A549 (cell line): ENCODE measurements at regions of chr2 and their contacts with region 1.

Region 1: GRCh38 chr2:112749755-112750559 is 14.5 kb downstream of the CKAP2L start:
- DNase-seq: peak; percentile 58 to 74
- ATAC-seq: peak; percentile 97 to 98
- H3K4me3 ChIP-seq: no peak overlapping the region
- H3K27ac ChIP-seq: peak overlapping the region in 1 of 2 experiments; percentile 44; a peak in 1 of 6 replicates
- H3K4me1 ChIP-seq: peaks cover 17% of the 10 kb centered on the region
- CTCF ChIP-seq: peak; percentile 97
- EP300 ChIP-seq: no peak
- POLR2A ChIP-seq: no peak
- RAD21 ChIP-seq: peak; percentile 86 to 88

Region 2: GRCh38 chr2:112737542-112738232 is 12.3 kb before region 1 on chr2:
- CTCF ChIA-PET with region 1: interaction called, 35 read pairs
- POLR2A ChIA-PET with region 1: no interaction called
- DNase-seq: no peak
- ATAC-seq: 0 out of 6 replicates have a peak, but pooled peaks of 1 of the 2 experiments have one; percentile 38
- H3K4me3 ChIP-seq: no peak overlapping the region
- H3K27ac ChIP-seq: peak overlapping the region in 1 of 2 experiments; percentile 13; a peak in 1 of 6 replicates
- H3K4me1 ChIP-seq: peaks cover 18% of the 10 kb centered on the region
- CTCF ChIP-seq: no peak
- EP300 ChIP-seq: no peak
- POLR2A ChIP-seq: no peak
- RAD21 ChIP-seq: no peak

Region 3: GRCh38 chr2:112782234-112782799 is 32.4 kb after region 1 on chr2:
- CTCF ChIA-PET with region 1: interaction called, 12 read pairs
- POLR2A ChIA-PET with region 1: no interaction called
- DNase-seq: no peak
- ATAC-seq: no peak
- H3K4me3 ChIP-seq: no peak overlapping the region
- H3K27ac ChIP-seq: no peak overlapping the region
- H3K4me1 ChIP-seq: 0 out of 3 replicates have a peak, but pooled peaks cover 7% of the 10 kb centered on the region
- CTCF ChIP-seq: no peak
- EP300 ChIP-seq: no peak
- POLR2A ChIP-seq: no peak
- RAD21 ChIP-seq: no peak

Region 4: DNA sequence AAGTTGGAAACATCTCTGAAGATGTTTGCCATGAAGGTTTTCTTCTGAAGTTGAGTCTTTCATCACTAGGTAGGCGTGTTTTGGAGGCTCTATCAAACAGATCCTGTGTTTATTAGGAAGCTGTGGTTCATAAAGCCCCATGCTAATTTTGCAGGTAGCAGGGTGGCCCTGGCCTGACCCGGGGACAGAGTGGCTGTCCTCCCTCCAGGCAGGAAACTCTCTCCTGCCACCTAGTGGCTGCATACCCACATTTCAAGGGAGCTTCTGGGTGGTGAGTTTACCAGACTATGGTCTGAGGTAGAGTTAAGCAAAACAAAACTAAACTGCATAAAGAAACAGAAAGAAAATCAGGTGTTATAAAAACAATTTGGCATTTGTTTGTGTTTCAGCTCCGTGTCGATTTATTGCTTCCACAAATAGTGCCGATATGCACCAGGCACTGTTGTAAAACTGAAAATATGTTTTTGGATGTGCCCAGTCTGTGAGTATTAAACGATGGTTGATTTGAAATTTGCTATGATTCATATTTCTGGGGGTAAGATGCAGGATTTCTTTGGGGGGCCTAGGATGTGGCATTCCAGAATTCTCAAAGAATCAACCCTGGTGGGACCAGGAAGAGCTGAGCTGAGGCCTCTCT is 135.0 kb after region 1 on chr2:
- CTCF ChIA-PET with region 1: interaction called, 31 read pairs
- POLR2A ChIA-PET with region 1: no interaction called
- DNase-seq: peak; percentile 40 to 41
- ATAC-seq: peak; percentile 64 to 86; a peak in 4 of 6 replicates
- H3K4me3 ChIP-seq: no peak overlapping the region
- H3K27ac ChIP-seq: no peak overlapping the region
- H3K4me1 ChIP-seq: no peaks in the 10 kb centered on the region
- CTCF ChIP-seq: peak; percentile 61
- EP300 ChIP-seq: no peak
- POLR2A ChIP-seq: no peak
- RAD21 ChIP-seq: peak; percentile 69 to 78

Region 5: DNA sequence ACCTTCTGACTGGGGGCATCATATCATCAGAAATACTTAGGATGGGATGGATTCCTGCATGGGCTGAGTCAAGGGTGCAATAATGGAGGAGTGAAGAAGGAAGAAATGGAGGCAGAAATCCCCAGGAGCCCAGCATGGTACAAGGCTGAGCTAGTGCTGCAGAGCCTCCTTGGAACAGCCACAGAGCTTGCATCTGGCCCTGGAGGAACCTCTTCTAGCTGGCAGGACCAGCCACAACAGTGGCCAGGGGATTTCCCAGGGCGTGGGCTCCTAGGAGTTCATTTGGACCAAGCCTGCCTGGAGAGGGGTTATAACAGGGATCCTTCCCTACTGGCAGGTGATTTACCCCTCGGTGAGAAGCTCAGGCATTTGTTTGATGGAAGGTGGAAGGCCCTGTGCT is 156.3 kb after region 1 on chr2:
- CTCF ChIA-PET with region 1: interaction called, 10 read pairs
- POLR2A ChIA-PET with region 1: no interaction called
- DNase-seq: no peak
- ATAC-seq: no peak
- H3K4me3 ChIP-seq: no peak overlapping the region
- H3K27ac ChIP-seq: no peak overlapping the region
- H3K4me1 ChIP-seq: no peaks in the 10 kb centered on the region
- CTCF ChIP-seq: no peak
- EP300 ChIP-seq: no peak
- POLR2A ChIP-seq: no peak
- RAD21 ChIP-seq: no peak

Region 6: GRCh38 chr2:112941753-112942658 is 192.0 kb after region 1 on chr2:
- CTCF ChIA-PET with region 1: interaction called, 120 read pairs
- POLR2A ChIA-PET with region 1: interaction called, 8 read pairs
- DNase-seq: peak; percentile 43 to 78
- ATAC-seq: peak; percentile 97 to 99
- H3K4me3 ChIP-seq: no peak overlapping the region
- H3K27ac ChIP-seq: no peak overlapping the region
- H3K4me1 ChIP-seq: no peaks in the 10 kb centered on the region
- CTCF ChIP-seq: peak; percentile 70
- EP300 ChIP-seq: no peak
- POLR2A ChIP-seq: no peak
- RAD21 ChIP-seq: peak; percentile 78 to 90